ENCODE measurements at regions of chr6 and their contacts with region 1.

Region 1: GRCh38 chr6:137944793-137945498 is 77.9 kb downstream of the TNFAIP3 start:
- DNase-seq: no peak
- H3K4me3 Mint-ChIP-seq: no peak overlapping the region
- H3K27ac Mint-ChIP-seq: peak overlapping the region; percentile 69
- H3K4me1 Mint-ChIP-seq: peaks cover 57% of the 10 kb centered on the region
- H3K27me3 Mint-ChIP-seq: no peaks in the 10 kb centered on the region

Region 2: DNA sequence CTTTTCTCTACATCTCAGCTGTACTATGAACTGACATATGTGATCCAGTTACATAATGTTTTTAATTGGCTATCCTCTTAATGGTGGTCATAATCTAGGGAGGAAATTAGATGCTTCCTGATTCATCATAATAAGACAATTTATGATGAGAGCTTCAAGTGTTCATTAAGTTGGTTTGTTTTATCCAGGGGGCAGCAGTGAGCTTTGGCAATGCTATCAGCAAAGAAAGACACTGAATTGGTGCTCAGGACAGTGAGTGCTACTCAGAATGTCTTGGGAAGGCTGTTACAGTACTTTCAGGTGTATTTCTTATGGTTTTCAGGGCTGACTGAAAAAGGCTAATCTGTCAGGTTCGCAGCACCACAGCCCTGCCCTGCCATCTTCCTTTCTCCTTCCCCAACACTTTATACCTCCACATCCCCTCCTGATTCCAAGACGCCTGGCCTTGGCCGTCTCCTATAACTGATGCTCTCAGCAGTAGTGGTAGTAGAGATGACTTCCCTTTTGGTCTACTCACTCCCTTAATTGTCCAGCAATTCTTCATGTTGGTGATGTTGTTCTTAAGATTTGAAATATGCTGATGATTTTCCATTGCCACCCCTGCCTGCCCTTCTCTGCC is 144.9 kb before region 1 on chr6:
- intact Hi-C with region 1: loop called (anchors 10 kb)
- DNase-seq: no peak
- H3K4me3 Mint-ChIP-seq: no peak overlapping the region
- H3K27ac Mint-ChIP-seq: peak overlapping the region; percentile 76
- H3K4me1 Mint-ChIP-seq: peaks cover 65% of the 10 kb centered on the region
- H3K27me3 Mint-ChIP-seq: no peaks in the 10 kb centered on the region

Region 3: GRCh38 chr6:137873273-137873762 is 71.6 kb before region 1 on chr6:
- intact Hi-C with region 1: loop called (anchors 1 kb)
- DNase-seq: peak; percentile 44
- H3K4me3 Mint-ChIP-seq: peak overlapping the region; percentile 96
- H3K27ac Mint-ChIP-seq: peak overlapping the region; percentile 96
- H3K4me1 Mint-ChIP-seq: peaks cover 52% of the 10 kb centered on the region
- H3K27me3 Mint-ChIP-seq: no peaks in the 10 kb centered on the region

Region 4: GRCh38 chr6:137903933-137904821 is 40.8 kb before region 1 on chr6:
- intact Hi-C with region 1: loop called (anchors 1 kb)
- DNase-seq: peak; percentile 44
- H3K4me3 Mint-ChIP-seq: peak overlapping the region; percentile 61
- H3K27ac Mint-ChIP-seq: peak overlapping the region; percentile 97
- H3K4me1 Mint-ChIP-seq: peaks cover 62% of the 10 kb centered on the region
- H3K27me3 Mint-ChIP-seq: no peaks in the 10 kb centered on the region

Region 5: DNA sequence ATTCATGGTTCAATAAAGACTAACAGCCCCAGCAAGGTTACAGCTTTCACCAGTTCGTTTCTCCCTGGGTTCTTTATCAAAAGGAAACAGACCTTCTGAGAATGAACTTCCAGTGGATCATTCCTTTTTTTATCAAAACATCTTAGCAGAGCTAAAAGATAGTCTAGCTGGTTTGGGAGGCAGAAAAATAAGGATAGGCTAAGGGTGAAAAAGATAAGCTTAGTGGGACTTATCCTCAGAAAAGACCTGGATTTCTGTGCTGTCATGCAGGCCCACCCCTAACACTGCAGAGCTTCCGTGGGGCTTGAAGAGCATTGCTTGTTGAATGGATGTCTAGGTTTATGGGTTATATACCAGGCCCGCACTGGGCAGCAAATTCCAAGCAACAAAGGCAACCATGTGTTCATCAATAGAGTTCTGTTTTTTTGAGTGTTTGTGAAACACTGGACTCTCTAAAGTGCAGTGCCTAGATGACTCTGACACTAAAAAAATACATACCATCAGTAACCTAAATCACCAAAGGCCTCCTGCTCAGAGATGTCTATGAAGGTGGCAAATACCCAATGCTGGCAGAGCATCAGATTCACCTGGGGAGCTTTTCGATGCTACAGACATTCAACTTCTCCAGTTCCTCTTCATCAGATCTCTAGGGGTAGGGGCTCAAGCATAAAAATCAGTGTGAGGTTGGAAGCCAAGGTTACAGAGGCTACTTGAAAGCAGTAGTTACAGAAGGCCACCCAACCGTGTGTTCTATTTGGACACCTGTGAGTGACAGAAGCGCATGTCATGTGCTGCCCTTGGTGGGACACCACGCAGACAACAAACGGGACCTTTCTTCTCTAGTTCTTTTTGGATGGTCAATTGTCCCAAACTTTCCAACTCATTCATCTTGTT is 24.9 kb before region 1 on chr6:
- intact Hi-C with region 1: no loop called
- DNase-seq: no peak
- H3K4me3 Mint-ChIP-seq: no peak overlapping the region
- H3K27ac Mint-ChIP-seq: no peak overlapping the region
- H3K4me1 Mint-ChIP-seq: peaks cover 34% of the 10 kb centered on the region
- H3K27me3 Mint-ChIP-seq: no peaks in the 10 kb centered on the region

Region 6: DNA sequence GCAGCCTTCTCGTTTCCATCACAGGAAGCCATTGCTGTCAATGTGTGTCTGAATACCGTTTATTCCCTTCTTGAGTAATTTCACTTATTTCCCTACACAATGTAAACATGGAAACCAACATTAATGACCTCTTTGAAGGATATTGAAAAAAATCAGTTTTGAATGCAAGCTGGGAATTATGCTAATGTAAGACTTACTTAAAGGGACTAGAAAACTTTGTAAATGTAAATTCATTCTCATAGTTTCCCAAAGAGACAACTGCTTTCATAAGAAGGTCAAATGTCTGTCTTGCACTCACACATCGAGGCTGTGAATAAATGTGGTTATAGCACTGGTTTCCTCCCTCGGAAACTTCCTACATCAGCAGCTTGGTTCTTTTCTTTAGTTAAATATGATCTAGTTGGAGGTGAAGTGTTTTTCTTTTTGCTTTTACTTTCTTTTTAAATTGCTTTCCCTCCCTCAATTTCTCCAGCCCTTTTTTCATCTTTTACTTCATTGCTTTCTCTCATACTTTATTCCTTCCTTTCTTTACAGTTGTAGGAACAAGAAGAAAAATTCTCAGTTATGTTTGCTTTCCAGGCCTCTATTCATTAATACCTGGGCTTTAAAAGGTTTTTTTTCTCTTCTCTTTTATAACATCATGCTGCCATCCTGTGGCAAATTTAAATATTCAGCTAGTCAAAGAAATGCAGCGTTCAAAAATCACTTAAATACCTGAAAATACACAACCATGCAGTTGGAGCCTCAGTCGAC is 30.4 kb after region 1 on chr6:
- intact Hi-C with region 1: loop called (anchors 1 kb)
- DNase-seq: peak; percentile 26
- H3K4me3 Mint-ChIP-seq: peak overlapping the region; percentile 72
- H3K27ac Mint-ChIP-seq: peak overlapping the region; percentile 93
- H3K4me1 Mint-ChIP-seq: peaks cover 57% of the 10 kb centered on the region
- H3K27me3 Mint-ChIP-seq: no peaks in the 10 kb centered on the region

Measured in activated T-helper 2 cell treated with anti-CD3 and anti-CD28 coated beads, Interferon-gamma antibody, Interleukin-2, Interleukin-4, amounts not matched to agents 10 μg/mL and 5 μg/mL and 100 μg/mL, durations not matched to agents 14 hours and 24 hours and 36 hours (primary cell).